ENCODE measurements at regions of chr1 and their contacts with region 1.

Region 1: GRCh38 chr1:160711602-160712311 is at the start of gene CD48:
- DNase-seq: no peak
- ATAC-seq: peak; percentile 38 to 58 (median 48)
- H3K4me3 ChIP-seq: peak within 1 kb of the TSS in 2 of 3 donors; percentile 7 to 37
- H3K27ac ChIP-seq: peak within 1 kb of the TSS in 2 of 3 donors; percentile 47 to 48
- H3K4me1 ChIP-seq: no peaks in the 10 kb centered on the region
- H3K27me3 ChIP-seq: no peaks in the 10 kb centered on the region
- CTCF ChIP-seq: no peak
- POLR2A ChIP-seq: no peak
- total RNA-seq, gene CD48: 0.68 to 5.0 (median 3.4) TPM

Region 2: DNA sequence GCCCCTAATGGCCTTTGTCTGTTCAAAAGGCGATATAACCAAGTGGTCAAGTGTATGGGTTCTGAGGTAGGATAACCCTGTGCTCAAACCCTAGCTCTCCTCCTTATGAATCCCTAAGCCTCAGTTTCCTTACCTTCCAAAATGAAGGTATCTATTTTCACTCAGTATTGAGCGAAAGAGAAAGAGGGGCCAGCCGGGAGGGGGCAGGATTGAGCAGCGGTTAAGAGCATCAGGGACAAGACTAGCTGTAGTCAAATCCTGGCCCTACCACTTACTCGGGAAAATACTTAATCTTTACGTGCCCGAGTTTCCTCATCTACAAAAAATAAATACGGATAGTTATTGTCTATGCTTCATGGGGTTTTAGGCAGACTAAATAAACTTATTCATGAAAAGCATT is 109.9 kb after region 1 on chr1:
- intact Hi-C with region 1: loop called in 1 of 2 experiments (anchors 10 kb)
- DNase-seq: no peak
- ATAC-seq: no peak
- H3K4me3 ChIP-seq: no peak overlapping the region
- H3K27ac ChIP-seq: no peak overlapping the region
- H3K4me1 ChIP-seq: no peaks in the 10 kb centered on the region
- H3K27me3 ChIP-seq: no peaks in the 10 kb centered on the region
- CTCF ChIP-seq: no peak
- POLR2A ChIP-seq: no peak

Measured in right lobe of liver (tissue), 6 donors.